Activated CD8-positive, alpha-beta T cell treated with anti-CD3 and anti-CD28 coated beads for 36 hours (primary cell): ENCODE measurements at regions of chr17 and their contacts with region 1.

Region 1: GRCh38 chr17:77208217-77208808 is 67.5 kb downstream of the SEC14L1 start:
- DNase-seq: no peak
- ATAC-seq: no peak
- H3K4me3 Mint-ChIP-seq: no peak overlapping the region
- H3K27ac Mint-ChIP-seq: no peak overlapping the region
- H3K4me1 Mint-ChIP-seq: no peaks in the 10 kb centered on the region
- H3K27me3 Mint-ChIP-seq: no peaks in the 10 kb centered on the region
- CTCF ChIP-seq: no peak

Region 2: DNA sequence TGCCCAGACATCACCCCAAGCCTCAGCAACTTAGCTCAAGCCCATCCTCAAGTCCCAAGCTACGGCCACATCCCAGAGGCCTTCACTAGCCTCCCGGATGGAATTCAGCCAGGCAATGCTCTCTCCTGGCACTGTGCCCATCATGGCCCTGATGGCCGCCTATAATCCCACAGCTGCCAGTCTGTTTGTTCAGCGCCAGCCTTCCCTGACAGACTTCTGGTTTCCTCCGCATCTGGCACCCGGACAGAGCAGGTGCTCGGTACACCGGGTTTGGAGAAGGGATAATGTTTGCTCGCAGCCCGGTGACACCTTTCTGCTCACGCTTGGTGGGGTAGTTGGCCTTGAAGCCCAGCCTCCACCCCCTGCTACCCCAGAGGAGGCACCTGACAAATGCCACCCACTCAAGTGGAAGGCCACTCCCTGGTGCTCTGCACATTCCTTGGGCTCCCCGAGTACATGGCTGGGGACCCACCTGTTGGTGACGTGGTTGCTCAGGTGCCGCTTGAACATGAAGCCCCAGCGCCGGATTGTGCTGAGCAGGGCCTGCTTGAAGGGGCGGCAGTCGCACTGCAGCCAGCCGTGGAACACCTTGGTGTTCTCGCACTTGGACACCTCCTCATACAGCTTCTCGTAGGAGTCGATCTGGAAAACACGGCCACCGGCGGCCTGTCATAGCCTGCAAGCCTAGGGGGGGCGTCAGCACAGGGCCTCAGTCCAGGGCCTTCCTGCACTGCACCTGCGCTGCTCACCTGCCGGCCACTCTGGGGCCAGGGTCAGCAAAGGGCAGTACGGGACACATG is 1321.8 kb after region 1 on chr17:
- CTCF ChIA-PET with region 1: no interaction called
- POLR2A ChIA-PET with region 1: no interaction called
- intact Hi-C with region 1: loop called (anchors 10 kb)
- DNase-seq: no peak
- ATAC-seq: no peak
- H3K4me3 Mint-ChIP-seq: no peak overlapping the region
- H3K27ac Mint-ChIP-seq: no peak overlapping the region
- H3K4me1 Mint-ChIP-seq: peaks cover 6% of the 10 kb centered on the region
- H3K27me3 Mint-ChIP-seq: no peaks in the 10 kb centered on the region
- CTCF ChIP-seq: no peak